Activated CD4-positive, alpha-beta T cell treated with anti-CD3 and anti-CD28 coated beads, Interleukin-2, amount 10 ng/mL, durations not matched to agents 24 days and 14 days (primary cell): ENCODE measurements at regions of chr12 and their contacts with region 1.

Region 1: DNA sequence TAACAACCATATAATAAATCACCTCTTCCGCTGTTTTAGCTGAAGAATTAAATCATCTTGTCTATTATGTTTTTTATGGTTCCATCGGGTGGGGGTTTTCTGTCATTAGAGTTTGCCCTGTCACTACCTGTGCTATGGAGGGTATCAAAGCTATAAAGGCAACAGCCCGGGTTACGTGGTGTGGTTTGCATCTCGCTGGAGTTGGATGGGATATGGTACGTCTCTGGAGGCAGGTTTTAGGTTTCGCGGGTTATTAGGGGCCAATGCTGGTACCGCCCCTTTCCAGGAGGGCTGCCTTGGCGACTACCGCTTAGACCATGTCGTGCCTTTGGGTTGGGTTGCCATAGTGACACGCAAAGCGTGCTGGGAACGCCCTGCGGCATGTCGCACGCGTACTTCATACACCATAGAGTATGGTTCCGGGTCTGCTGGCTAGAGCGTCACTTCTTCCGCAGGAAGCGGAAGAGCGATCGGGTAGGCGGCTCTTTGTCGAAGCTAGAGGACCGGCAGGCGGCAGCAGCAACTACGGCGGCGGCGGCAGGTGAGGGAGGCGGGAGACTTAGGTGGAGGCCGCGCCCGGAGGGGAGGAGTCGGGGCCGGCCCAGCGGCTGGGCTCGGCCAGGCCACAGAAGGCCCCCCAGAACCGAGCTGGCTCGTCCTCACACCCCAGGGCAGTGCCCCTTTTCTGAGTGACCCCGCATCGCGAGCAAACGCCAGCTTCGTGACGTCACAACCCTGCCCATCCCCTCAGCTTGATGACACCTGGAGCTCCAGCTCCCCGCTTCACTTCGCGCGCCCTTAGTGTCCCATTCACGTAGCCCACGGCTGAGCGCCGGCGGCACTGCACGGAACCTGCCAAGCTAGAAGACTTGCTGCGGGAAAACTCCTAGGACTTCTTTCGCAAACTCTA is at the start of gene ZC3H10:
- DNase-seq: peak; percentile 99
- H3K4me3 Mint-ChIP-seq: peak within 1 kb of the TSS; percentile 97
- H3K27ac Mint-ChIP-seq: peak within 1 kb of the TSS; percentile 100
- H3K4me1 Mint-ChIP-seq: peaks cover 35% of the 10 kb centered on the region
- H3K27me3 Mint-ChIP-seq: peaks cover 3% of the 10 kb centered on the region
- total RNA-seq, gene ZC3H10: 8.9 and 11.2 TPM in 2 replicates

Region 2: GRCh38 chr12:55926738-55927587 is 191.1 kb before region 1 on chr12:
- intact Hi-C with region 1: loop called (anchors 1 kb)
- DNase-seq: peak; percentile 96
- H3K4me3 Mint-ChIP-seq: peak overlapping the region; percentile 99
- H3K27ac Mint-ChIP-seq: peak overlapping the region; percentile 98
- H3K4me1 Mint-ChIP-seq: peaks cover 40% of the 10 kb centered on the region
- H3K27me3 Mint-ChIP-seq: peaks cover 2% of the 10 kb centered on the region

Region 3: GRCh38 chr12:56041552-56042429 is 76.2 kb before region 1 on chr12 and contains the start of gene RPS26:
- intact Hi-C with region 1: loop called (anchors 1 kb)
- DNase-seq: peak; percentile 97
- H3K4me3 Mint-ChIP-seq: peak within 1 kb of the TSS; percentile 100
- H3K27ac Mint-ChIP-seq: peak within 1 kb of the TSS; percentile 99
- H3K4me1 Mint-ChIP-seq: peaks cover 50% of the 10 kb centered on the region
- H3K27me3 Mint-ChIP-seq: no peaks in the 10 kb centered on the region
- total RNA-seq, gene RPS26: 40.5 and 46.3 TPM in 2 replicates

Region 4: DNA sequence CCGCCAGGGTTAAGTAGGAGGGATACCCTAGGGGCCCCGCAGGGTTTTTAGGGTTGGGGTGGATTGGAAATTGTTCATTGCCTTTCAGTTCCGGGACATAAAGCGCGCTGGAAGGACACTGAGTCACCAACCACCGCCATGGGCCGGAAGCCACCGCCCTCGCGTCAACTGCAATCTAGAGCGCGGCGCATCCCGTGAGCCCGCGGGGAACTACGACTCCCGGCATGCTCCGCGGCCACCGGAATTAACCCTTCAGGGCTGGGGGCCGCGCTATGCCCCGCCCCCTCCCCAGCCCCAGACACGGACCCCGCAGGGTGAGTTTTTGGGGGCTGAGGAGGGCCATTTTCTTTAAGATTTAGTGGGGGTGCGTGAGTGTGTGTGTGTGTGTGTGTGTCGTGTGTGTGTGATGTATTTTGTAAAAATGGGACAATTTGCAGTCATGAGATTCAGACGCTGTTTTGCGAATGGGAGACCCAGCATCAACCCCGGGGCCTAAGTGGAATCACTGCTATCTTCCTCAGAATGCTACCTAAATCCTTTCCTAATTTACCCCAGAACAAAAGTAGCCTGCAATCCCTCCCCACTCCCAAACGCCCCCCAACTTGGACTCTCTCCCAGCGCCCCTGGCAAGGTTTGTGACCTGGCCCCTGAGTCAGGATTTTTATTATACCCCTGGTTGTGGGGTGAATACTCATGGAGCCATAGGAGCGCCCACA is 34.4 kb after region 1 on chr12 and contains the start of gene MYL6B:
- intact Hi-C with region 1: loop called (anchors 1 kb)
- DNase-seq: peak; percentile 98
- H3K4me3 Mint-ChIP-seq: peak within 1 kb of the TSS; percentile 88
- H3K27ac Mint-ChIP-seq: peak within 1 kb of the TSS; percentile 98
- H3K4me1 Mint-ChIP-seq: peaks cover 39% of the 10 kb centered on the region
- H3K27me3 Mint-ChIP-seq: no peaks in the 10 kb centered on the region
- total RNA-seq, gene MYL6B: 63.3 and 68.9 TPM in 2 replicates

Region 5: GRCh38 chr12:56224102-56224701 is 106.2 kb after region 1 on chr12 and contains the start of gene NABP2:
- intact Hi-C with region 1: loop called (anchors 1 kb)
- DNase-seq: peak; percentile 99
- H3K4me3 Mint-ChIP-seq: peak within 1 kb of the TSS; percentile 100
- H3K27ac Mint-ChIP-seq: peak within 1 kb of the TSS; percentile 85
- H3K4me1 Mint-ChIP-seq: peaks cover 39% of the 10 kb centered on the region
- H3K27me3 Mint-ChIP-seq: no peaks in the 10 kb centered on the region
- total RNA-seq, gene NABP2: 94.7 and 96.0 TPM in 2 replicates

Region 6: GRCh38 chr12:56315622-56316473 is 197.8 kb after region 1 on chr12 and contains the start of gene CNPY2:
- intact Hi-C with region 1: loop called (anchors 1 kb)
- DNase-seq: peak; percentile 97
- H3K4me3 Mint-ChIP-seq: peak within 1 kb of the TSS; percentile 97
- H3K27ac Mint-ChIP-seq: peak within 1 kb of the TSS; percentile 98
- H3K4me1 Mint-ChIP-seq: peaks cover 7% of the 10 kb centered on the region
- H3K27me3 Mint-ChIP-seq: no peaks in the 10 kb centered on the region
- total RNA-seq, gene CNPY2: 165 and 169 TPM in 2 replicates

Region 7: DNA sequence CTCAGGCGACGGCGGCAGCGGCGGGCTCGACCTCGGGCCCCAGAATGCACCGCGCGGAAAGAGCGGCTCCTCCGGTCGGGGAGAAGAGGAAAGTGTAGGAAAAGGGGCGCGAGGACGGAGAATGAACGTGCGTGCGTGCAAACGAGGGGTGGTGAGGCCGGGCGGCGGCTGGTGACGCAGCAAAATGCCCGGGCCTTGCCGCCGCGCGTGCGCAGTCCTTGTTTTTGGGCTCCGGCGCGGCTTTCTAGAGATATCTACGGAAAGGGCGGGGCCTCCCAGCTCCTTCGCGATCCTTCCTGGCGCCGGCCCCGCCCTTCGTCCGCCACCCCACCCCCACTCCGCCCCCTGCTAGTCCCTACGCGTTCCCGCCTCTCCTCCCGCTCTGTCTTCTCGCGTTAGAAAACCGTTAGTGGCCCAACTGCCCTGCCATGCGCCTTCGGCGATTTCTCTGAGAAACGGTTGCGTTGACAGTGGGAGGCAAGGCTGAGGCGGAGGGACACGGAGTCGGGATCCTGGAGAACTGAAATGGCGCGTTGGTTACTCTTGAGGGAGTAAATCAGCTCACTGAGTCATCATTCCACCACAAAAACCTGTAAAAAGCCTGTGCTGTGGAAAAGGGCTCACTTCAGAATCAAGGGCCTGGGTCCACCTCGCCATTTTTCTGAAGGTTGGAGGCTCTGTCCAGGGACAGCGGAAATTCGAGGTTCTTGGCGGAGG is 570.3 kb after region 1 on chr12 and contains the start of gene PTGES3:
- intact Hi-C with region 1: loop called (anchors 1 kb)
- DNase-seq: peak; percentile 99
- H3K4me3 Mint-ChIP-seq: peak within 1 kb of the TSS; percentile 99
- H3K27ac Mint-ChIP-seq: peak within 1 kb of the TSS; percentile 97
- H3K4me1 Mint-ChIP-seq: peaks cover 24% of the 10 kb centered on the region
- H3K27me3 Mint-ChIP-seq: no peaks in the 10 kb centered on the region
- total RNA-seq, gene PTGES3: 351 and 357 TPM in 2 replicates